B cell (primary cell): ENCODE measurements at regions of chr1 and their contacts with region 1.

Region 1: GRCh38 chr1:93345633-93346420 is at the start of gene DR1:
- DNase-seq: peak; percentile 93
- ATAC-seq: peak; percentile 84
- H3K4me3 ChIP-seq: peak within 1 kb of the TSS; percentile 78 to 94 (median 91)
- H3K4me3 Mint-ChIP-seq: peak within 1 kb of the TSS; percentile 95
- H3K27ac ChIP-seq: peak within 1 kb of the TSS; percentile 81 to 95
- H3K27ac Mint-ChIP-seq: peak within 1 kb of the TSS; percentile 98
- H3K4me1 ChIP-seq: peaks cover 12 to 40% of the 10 kb centered on the region in 2 donors
- H3K4me1 Mint-ChIP-seq: peaks cover 50% of the 10 kb centered on the region
- H3K27me3 ChIP-seq: no peaks in the 10 kb centered on the region
- H3K27me3 Mint-ChIP-seq: no peaks in the 10 kb centered on the region
- CTCF ChIP-seq: no peak
- total RNA-seq, gene DR1: 65.6 and 69.2 TPM in 2 replicates

Region 2: GRCh38 chr1:93179886-93180722 is 165.7 kb before region 1 on chr1 and contains the start of gene TMED5:
- CTCF ChIA-PET with region 1: no interaction called
- POLR2A ChIA-PET with region 1: no interaction called
- intact Hi-C with region 1: loop called (anchors 1 kb)
- DNase-seq: peak; percentile 97
- ATAC-seq: peak; percentile 85
- H3K4me3 ChIP-seq: peak within 1 kb of the TSS; percentile 81 to 98 (median 97)
- H3K4me3 Mint-ChIP-seq: peak within 1 kb of the TSS; percentile 90
- H3K27ac ChIP-seq: peak within 1 kb of the TSS; percentile 95 to 96
- H3K27ac Mint-ChIP-seq: peak within 1 kb of the TSS; percentile 93
- H3K4me1 ChIP-seq: peaks cover 27 to 35% of the 10 kb centered on the region in 2 donors
- H3K4me1 Mint-ChIP-seq: peaks cover 34% of the 10 kb centered on the region
- H3K27me3 ChIP-seq: no peaks in the 10 kb centered on the region
- H3K27me3 Mint-ChIP-seq: no peaks in the 10 kb centered on the region
- CTCF ChIP-seq: peak; percentile 24
- total RNA-seq, gene TMED5: 46.1 and 50.7 TPM in 2 replicates

Region 3: GRCh38 chr1:93447516-93448291 is 101.9 kb after region 1 on chr1 and contains the start of gene FNBP1L:
- CTCF ChIA-PET with region 1: no interaction called
- POLR2A ChIA-PET with region 1: no interaction called
- intact Hi-C with region 1: loop called (anchors 1 kb)
- DNase-seq: peak; percentile 71
- ATAC-seq: peak; percentile 85
- H3K4me3 ChIP-seq: peak within 1 kb of the TSS; percentile 43 to 92 (median 80)
- H3K4me3 Mint-ChIP-seq: peak within 1 kb of the TSS; percentile 98
- H3K27ac ChIP-seq: peak within 1 kb of the TSS in 1 of 2 donors; percentile 64
- H3K27ac Mint-ChIP-seq: peak within 1 kb of the TSS; percentile 83
- H3K4me1 ChIP-seq: peaks cover 18 to 20% of the 10 kb centered on the region in 2 donors
- H3K4me1 Mint-ChIP-seq: peaks cover 27% of the 10 kb centered on the region
- H3K27me3 ChIP-seq: peaks cover 0 to 7% (median 3%) of the 10 kb centered on the region in 4 experiments
- H3K27me3 Mint-ChIP-seq: peaks cover 23% of the 10 kb centered on the region
- CTCF ChIP-seq: no peak
- total RNA-seq, gene FNBP1L: 5.4 and 5.7 TPM in 2 replicates

Region 4: GRCh38 chr1:94417978-94418663 is 1072.3 kb after region 1 on chr1 and contains the start of gene ABCD3:
- CTCF ChIA-PET with region 1: no interaction called
- POLR2A ChIA-PET with region 1: no interaction called
- intact Hi-C with region 1: loop called (anchors 10 kb)
- DNase-seq: peak; percentile 98
- ATAC-seq: peak; percentile 95
- H3K4me3 ChIP-seq: peak within 1 kb of the TSS; percentile 67 to 89 (median 85)
- H3K4me3 Mint-ChIP-seq: no peak within 1 kb of the TSS
- H3K27ac ChIP-seq: peak within 1 kb of the TSS; percentile 73 to 80
- H3K27ac Mint-ChIP-seq: peak within 1 kb of the TSS; percentile 77
- H3K4me1 ChIP-seq: peaks cover 12 to 15% of the 10 kb centered on the region in 2 donors
- H3K4me1 Mint-ChIP-seq: peaks cover 22% of the 10 kb centered on the region
- H3K27me3 ChIP-seq: peaks cover 0 to 5% (median 2%) of the 10 kb centered on the region in 4 experiments
- H3K27me3 Mint-ChIP-seq: peaks cover 7% of the 10 kb centered on the region
- CTCF ChIP-seq: no peak
- total RNA-seq, gene ABCD3: 19.4 and 21.0 TPM in 2 replicates

Region 5: GRCh38 chr1:95233737-95234500 is 1888.1 kb after region 1 on chr1 and contains the start of gene RWDD3:
- CTCF ChIA-PET with region 1: no interaction called
- POLR2A ChIA-PET with region 1: no interaction called
- intact Hi-C with region 1: loop called (anchors 10 kb)
- DNase-seq: peak; percentile 95
- ATAC-seq: peak; percentile 96
- H3K4me3 ChIP-seq: peak within 1 kb of the TSS; percentile 55 to 86 (median 78)
- H3K4me3 Mint-ChIP-seq: peak within 1 kb of the TSS; percentile 87
- H3K27ac ChIP-seq: peak within 1 kb of the TSS; percentile 63 to 73
- H3K27ac Mint-ChIP-seq: peak within 1 kb of the TSS; percentile 89
- H3K4me1 ChIP-seq: peaks cover 10 to 11% of the 10 kb centered on the region in 2 donors
- H3K4me1 Mint-ChIP-seq: peaks cover 35% of the 10 kb centered on the region
- H3K27me3 ChIP-seq: peaks cover 0 to 10% (median 4%) of the 10 kb centered on the region in 4 experiments
- H3K27me3 Mint-ChIP-seq: peaks cover 10% of the 10 kb centered on the region
- CTCF ChIP-seq: peak; percentile 82
- total RNA-seq, gene RWDD3: 21.9 and 28.1 TPM in 2 replicates